ENCODE measurements at regions of chr1 and their contacts with region 1.

Region 1: DNA sequence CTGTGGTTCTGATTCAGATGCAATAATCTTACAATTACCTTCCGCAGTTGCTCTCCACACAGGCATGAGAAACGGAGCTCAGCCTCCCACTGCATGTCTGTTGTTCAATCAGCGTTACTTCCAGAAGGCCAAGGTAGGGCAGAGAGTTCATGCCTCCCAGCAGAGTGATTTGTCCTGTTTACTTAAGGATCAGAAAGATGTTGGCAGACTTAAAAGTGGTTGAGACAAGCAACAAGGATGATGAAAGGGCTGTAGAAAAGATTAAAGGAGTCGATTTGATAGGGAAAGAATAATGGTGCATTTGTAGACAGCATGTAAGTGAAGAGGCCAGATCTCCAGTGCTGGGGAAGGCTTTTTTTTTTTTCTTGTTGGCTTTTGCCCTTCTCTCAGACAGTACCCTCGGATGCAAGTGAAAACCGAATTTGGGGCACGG is 26.6 kb downstream of the ARMH1 start:
- DNase-seq: no peak
- H3K4me3 ChIP-seq: no peak overlapping the region
- CTCF ChIP-seq: no peak

Region 2: GRCh38 chr1:44714944-44715571 is 13.9 kb after region 1 on chr1:
- CTCF ChIA-PET with region 1: interaction called, 37 read pairs
- POLR2A ChIA-PET with region 1: no interaction called
- DNase-seq: no peak
- H3K4me3 ChIP-seq: no peak overlapping the region
- CTCF ChIP-seq: peak; percentile 88

Measured in AG04449 (cell line).